ENCODE measurements at regions of chr16 and their contacts with region 1.

Region 1: GRCh38 chr16:10964039-10964890 is 19.9 kb downstream of the CLEC16A start:
- DNase-seq: peak; percentile 89
- ATAC-seq: peak; percentile 94

Region 2: GRCh38 chr16:10895053-10895946 is 69.0 kb before region 1 on chr16:
- intact Hi-C with region 1: no loop called
- DNase-seq: peak; percentile 70
- ATAC-seq: peak; percentile 65

Region 3: GRCh38 chr16:10906914-10907756 is 57.1 kb before region 1 on chr16:
- intact Hi-C with region 1: no loop called
- DNase-seq: peak; percentile 74
- ATAC-seq: peak; percentile 89

Region 4: GRCh38 chr16:11004957-11005610 is 40.8 kb after region 1 on chr16:
- intact Hi-C with region 1: no loop called
- DNase-seq: no peak
- ATAC-seq: no peak

Region 5: DNA sequence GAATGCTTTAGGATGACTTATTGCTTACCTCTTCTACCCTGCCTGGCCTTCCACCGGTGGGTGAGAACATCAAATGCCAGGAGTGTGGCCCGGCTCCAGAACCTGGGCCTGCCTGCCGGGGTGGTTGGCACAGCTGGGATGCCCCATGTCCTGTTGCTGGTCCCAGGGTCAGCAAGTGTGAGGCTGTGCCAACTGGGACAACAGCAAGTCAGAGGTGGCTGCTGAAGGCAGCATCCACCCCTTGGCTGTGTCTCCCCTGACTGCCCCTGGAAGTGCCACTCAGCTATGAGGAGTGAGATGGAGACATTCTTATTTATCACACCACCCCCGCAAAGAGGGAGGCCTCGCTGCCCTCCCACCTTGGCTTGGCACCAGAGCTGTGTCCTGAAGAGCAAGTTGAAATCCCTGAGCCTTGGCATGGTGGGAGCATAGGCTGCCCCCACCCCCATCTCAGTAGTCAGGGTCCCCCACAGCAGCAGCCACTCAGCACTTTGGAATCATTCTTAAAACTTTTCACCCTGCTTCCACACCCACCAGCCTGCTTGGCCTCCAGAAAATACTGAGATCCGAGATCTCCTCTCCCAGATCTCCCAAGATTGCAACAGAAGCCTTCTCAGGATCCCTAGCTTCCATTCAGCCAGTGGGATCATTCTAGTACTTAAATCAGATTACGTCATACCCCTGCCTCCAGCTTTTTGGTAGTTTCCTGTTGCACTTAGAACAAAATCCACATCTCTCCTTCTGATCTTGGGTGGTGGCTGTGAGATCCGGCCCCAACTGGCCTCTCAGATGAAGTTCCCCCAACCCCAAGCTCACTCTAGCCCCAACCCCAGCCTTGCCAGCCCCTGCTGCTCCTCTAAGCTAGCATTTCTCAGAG is 164.2 kb after region 1 on chr16:
- intact Hi-C with region 1: no loop called
- DNase-seq: peak; percentile 85
- ATAC-seq: peak; percentile 82

Region 6: GRCh38 chr16:11356573-11357331 is 392.5 kb after region 1 on chr16:
- intact Hi-C with region 1: loop called (anchors 10 kb)
- DNase-seq: peak; percentile 82
- ATAC-seq: peak; percentile 57

Measured in Right ventricle myocardium superior (tissue), 1 donor.